ENCODE measurements at regions of chr12 and their contacts with region 1.

Region 1: GRCh38 chr12:119988782-119989668 is at the start of gene BICDL1:
- DNase-seq: peak; percentile 99
- H3K4me3 Mint-ChIP-seq: peak within 1 kb of the TSS; percentile 90
- H3K27ac Mint-ChIP-seq: peak within 1 kb of the TSS; percentile 50
- H3K4me1 Mint-ChIP-seq: peaks cover 15% of the 10 kb centered on the region
- H3K27me3 Mint-ChIP-seq: peaks cover 7% of the 10 kb centered on the region
- CTCF ChIP-seq: no peak
- total RNA-seq, gene BICDL1: 25.7 and 31.6 TPM in 2 replicates

Region 2: GRCh38 chr12:120079411-120080026 is 90.5 kb after region 1 on chr12:
- CTCF ChIA-PET with region 1: no interaction called
- intact Hi-C with region 1: loop called (anchors 2 kb)
- DNase-seq: peak; percentile 29
- H3K4me3 Mint-ChIP-seq: peak overlapping the region; percentile 20
- H3K27ac Mint-ChIP-seq: peak overlapping the region; percentile 35
- H3K4me1 Mint-ChIP-seq: peaks cover 22% of the 10 kb centered on the region
- H3K27me3 Mint-ChIP-seq: no peaks in the 10 kb centered on the region
- CTCF ChIP-seq: no peak

Measured in Calu3 (cell line).